ENCODE measurements at regions of chr9 and their contacts with region 1.

Region 1: DNA sequence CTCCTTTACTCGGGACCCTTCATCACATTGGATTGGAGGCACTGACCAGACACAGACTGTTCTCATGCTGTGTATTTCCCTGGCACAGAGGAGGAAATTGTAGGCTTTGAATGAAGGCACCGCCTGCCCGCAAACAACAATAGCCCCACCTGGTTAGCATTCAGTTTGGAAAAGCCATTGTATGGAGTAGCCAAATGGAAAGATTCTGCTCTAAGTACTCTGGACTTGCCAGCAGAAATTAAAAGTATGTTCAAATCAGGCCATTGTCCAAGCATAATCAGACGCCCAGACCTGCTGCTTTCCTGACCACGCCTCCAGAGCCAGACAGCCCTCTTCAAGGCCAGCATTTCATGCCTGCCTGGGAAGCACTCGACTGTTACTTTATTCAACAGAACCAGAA is 8.0 kb upstream of the SEMA4D start:
- DNase-seq: no peak
- ATAC-seq: no peak
- H3K4me3 Mint-ChIP-seq: peak overlapping the region in 3 of 10 donors; percentile 7 to 67 (median 16)
- H3K27ac Mint-ChIP-seq: peak overlapping the region in 8 of 10 donors; percentile 45 to 93 (median 78)
- H3K4me1 Mint-ChIP-seq: peaks cover 57 to 94% (median 92%) of the 10 kb centered on the region in 4 donors
- H3K27me3 Mint-ChIP-seq: no peaks in the 10 kb centered on the region

Region 2: DNA sequence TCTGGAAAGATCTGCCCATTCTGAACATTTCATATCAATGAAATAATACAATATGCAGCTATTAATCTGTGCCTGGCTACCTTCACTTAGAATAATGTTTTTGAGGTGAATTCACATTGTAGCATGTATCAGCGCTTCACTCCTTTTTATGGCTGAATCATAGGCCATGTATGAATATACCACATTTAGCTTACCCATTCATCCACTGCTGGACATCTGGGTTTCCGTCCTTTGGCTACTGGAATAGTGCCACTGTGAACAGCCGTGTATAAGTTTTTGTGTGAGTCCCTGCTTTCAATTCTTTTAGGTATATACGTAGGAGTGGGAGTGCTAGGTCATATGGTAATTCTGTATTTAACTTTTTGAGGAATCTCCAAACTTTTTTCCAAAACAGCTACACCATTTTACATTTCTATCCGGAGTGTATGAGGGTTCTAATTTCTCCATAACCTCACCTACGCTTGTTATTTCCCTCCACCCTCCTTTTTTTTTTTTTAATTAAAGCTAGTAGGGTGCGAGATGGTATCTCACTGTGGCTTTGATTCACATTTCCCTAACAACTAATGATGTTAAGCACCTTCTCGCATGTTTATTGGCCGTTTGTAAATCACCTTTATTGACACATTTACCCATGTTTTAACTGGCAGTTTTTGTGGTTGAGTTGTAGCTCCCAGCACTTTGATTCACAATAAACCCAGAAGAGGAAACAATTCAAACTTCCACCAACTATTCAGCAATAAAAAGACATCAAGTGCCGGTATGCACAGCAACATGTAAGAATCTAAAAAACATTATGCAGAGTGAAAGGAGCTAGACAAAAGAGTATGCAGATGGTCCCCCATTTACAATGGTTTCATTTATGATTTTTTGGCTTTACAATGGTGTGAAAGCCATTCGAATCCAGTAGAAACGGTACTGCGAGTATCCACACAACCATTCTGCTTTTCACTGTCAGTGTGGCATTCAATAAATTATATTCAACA is 16.1 kb before region 1 on chr9:
- POLR2A ChIA-PET with region 1: interaction called, 12 read pairs
- DNase-seq: peak in 4 of 10 donors; percentile 60 to 82 (median 78)
- ATAC-seq: peak; percentile 65 to 90
- H3K4me3 Mint-ChIP-seq: peak overlapping the region; percentile 49 to 99 (median 86)
- H3K27ac Mint-ChIP-seq: peak overlapping the region; percentile 26 to 97 (median 94)
- H3K4me1 Mint-ChIP-seq: peaks cover 60 to 97% (median 95%) of the 10 kb centered on the region in 4 donors
- H3K27me3 Mint-ChIP-seq: no peaks in the 10 kb centered on the region

Region 3: DNA sequence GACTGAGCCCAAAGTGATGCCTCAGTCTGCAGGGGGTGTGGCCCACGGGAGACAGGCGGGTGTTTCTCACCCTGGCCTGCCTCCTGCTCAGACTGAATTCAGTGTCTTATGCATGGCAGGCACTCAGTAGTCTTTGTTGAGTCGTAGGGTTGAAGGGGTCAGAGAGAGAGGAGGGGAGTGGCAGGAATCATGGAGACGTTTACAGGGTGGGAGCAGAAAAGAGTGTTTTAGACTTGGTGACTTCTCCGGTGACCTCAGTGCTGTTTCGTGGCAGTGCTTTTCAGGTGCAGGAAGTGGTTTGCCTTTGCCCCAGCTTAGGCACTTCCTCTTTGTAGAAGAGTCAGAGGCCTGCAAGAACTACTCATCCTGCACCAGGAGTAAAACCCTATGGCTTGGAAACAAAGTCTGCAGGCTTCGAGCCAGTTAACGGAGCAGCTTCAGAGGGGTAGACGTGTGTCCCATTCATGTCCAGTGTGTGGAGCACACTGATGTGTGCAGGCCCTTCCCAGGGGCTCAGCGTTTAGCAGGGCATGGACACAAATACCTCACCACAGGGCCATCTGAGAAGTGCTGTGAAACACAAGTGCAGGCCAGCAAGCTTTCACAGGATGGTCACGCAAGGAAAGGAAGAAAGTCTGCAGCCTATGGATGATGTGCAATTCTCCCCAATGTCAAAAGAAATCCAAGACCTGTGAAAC is 16.5 kb after region 1 on chr9:
- POLR2A ChIA-PET with region 1: interaction called, 65 read pairs
- DNase-seq: peak; percentile 41 to 90 (median 81)
- ATAC-seq: peak; percentile 84 to 89
- H3K4me3 Mint-ChIP-seq: peak overlapping the region; percentile 49 to 87 (median 75)
- H3K27ac Mint-ChIP-seq: peak overlapping the region; percentile 87 to 98 (median 96)
- H3K4me1 Mint-ChIP-seq: peaks cover 56 to 99% (median 94%) of the 10 kb centered on the region in 4 donors
- H3K27me3 Mint-ChIP-seq: no peaks in the 10 kb centered on the region